Endothelial cell of umbilical vein (primary cell): ENCODE measurements at regions of chr6 and their contacts with region 1.

Region 1: GRCh38 chr6:18496462-18496861 is 109.3 kb downstream of the RNF144B start:
- DNase-seq: peak; percentile 72
- H3K4me3 ChIP-seq: no peak overlapping the region
- H3K27ac ChIP-seq: no peak overlapping the region
- H3K4me1 ChIP-seq: peaks cover 15% of the 10 kb centered on the region
- H3K27me3 ChIP-seq: no peaks in the 10 kb centered on the region
- CTCF ChIP-seq: no peak
- POLR2A ChIP-seq: no peak

Region 2: GRCh38 chr6:18302561-18303439 is 193.7 kb before region 1 on chr6:
- CTCF ChIA-PET with region 1: no interaction called
- POLR2A ChIA-PET with region 1: no interaction called
- dilution Hi-C with region 1: no loop called
- intact Hi-C with region 1: no loop called
- DNase-seq: peak; percentile 26
- H3K4me3 ChIP-seq: no peak overlapping the region
- H3K27ac ChIP-seq: no peak overlapping the region
- H3K4me1 ChIP-seq: no peaks in the 10 kb centered on the region
- H3K27me3 ChIP-seq: peaks cover 0 to 2% of the 10 kb centered on the region in 2 experiments
- CTCF ChIP-seq: no peak
- POLR2A ChIP-seq: no peak

Region 3: GRCh38 chr6:18323935-18324705 is 172.3 kb before region 1 on chr6:
- CTCF ChIA-PET with region 1: interaction called, 93 read pairs
- POLR2A ChIA-PET with region 1: no interaction called
- dilution Hi-C with region 1: no loop called
- intact Hi-C with region 1: no loop called
- DNase-seq: peak; percentile 69
- H3K4me3 ChIP-seq: no peak overlapping the region
- H3K27ac ChIP-seq: no peak overlapping the region
- H3K4me1 ChIP-seq: peaks cover 16% of the 10 kb centered on the region
- H3K27me3 ChIP-seq: no peaks in the 10 kb centered on the region
- CTCF ChIP-seq: peak; percentile 48 to 49
- POLR2A ChIP-seq: no peak